Endothelial cell of umbilical vein (primary cell): ENCODE measurements at regions of chr6 and their contacts with region 1.

Region 1: DNA sequence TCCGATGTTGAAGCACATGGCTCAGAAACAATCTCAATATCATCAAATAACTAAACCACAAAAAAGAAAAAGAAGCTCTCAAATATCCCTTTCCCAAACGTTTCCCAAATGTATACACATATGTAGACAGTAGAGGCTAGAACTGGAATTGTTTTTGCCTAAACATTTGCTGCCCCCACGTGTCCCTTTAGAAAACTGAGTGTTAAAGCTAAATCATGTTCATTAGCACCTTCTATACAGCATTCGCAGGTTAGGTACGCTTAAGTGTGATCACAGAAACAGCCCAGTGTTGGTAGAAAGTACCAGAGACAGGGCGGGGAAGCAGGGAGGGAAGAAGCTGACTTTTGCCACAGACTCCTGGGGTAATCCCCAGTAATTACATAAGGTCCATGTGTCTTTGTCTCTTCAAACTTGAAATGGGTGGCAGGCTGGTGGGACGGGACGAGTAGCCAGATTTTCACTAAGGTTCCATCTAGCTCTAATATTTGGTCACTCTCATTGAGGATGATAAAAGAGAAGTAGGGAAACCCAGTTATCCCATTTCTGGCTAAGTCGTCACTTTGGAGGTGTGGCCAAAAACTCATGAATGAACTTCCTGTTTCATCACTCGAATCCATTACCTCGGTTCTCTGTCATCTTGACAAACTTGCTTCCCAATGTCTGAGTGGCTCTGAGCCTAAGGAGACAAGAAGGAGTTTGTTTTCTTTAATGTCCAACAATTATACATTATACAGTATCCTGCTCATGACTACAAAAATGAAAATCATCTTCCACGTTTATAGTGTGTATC is 15.0 kb upstream of the TFAP2A start:
- DNase-seq: peak; percentile 65
- H3K4me3 ChIP-seq: no peak overlapping the region
- H3K27ac ChIP-seq: no peak overlapping the region
- H3K4me1 ChIP-seq: peaks cover 5% of the 10 kb centered on the region
- H3K27me3 ChIP-seq: peaks cover 24 to 41% of the 10 kb centered on the region in 2 experiments
- CTCF ChIP-seq: peak; percentile 34 to 37
- POLR2A ChIP-seq: no peak

Region 2: DNA sequence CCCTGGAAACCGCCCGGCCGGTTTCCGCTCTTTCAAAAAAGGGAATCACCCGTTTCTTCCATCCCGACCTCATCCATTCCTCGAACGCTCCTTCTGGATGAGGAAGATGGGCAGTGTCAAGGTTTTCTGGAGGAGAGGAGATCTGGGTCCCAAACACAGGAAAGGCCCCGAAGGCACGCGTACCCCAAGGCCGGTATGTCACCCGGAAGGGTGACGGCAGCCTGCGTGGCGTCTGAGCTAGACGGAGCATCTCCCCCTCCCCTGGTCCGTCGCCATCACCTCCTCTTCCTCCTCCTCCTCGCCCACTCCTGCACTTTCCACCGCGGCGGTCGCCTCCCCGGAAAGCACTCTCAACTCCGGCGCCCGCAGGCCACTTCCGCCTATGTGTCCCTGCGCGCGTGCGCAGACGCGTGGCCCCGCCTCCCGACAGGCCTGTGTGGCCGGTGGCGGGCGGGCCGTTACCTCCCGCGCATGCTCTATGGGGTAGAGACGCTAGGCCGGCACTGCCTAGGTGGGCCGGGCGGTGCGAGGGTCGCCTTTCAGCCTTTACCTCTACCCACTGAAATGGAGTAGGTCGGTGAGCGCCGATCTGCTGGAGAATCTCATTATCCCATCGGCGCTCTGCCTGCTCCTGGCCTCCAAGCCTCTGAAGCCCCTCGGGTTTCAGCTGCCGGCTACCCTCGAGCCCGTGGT is 1994.5 kb before region 1 on chr6 and contains the start of gene SLC35B3:
- CTCF ChIA-PET with region 1: interaction called, 5 read pairs
- POLR2A ChIA-PET with region 1: no interaction called
- dilution Hi-C with region 1: no loop called
- intact Hi-C with region 1: loop called (anchors 10 kb)
- DNase-seq: peak; percentile 91
- H3K4me3 ChIP-seq: peak within 1 kb of the TSS; percentile 75 to 93 (median 85)
- H3K27ac ChIP-seq: peak within 1 kb of the TSS; percentile 74
- H3K4me1 ChIP-seq: peaks cover 17% of the 10 kb centered on the region
- H3K27me3 ChIP-seq: no peaks in the 10 kb centered on the region
- CTCF ChIP-seq: no peak
- POLR2A ChIP-seq: peak; percentile 83
- total RNA-seq, gene SLC35B3: 16.8 and 21.5 TPM in 2 replicates

Region 3: DNA sequence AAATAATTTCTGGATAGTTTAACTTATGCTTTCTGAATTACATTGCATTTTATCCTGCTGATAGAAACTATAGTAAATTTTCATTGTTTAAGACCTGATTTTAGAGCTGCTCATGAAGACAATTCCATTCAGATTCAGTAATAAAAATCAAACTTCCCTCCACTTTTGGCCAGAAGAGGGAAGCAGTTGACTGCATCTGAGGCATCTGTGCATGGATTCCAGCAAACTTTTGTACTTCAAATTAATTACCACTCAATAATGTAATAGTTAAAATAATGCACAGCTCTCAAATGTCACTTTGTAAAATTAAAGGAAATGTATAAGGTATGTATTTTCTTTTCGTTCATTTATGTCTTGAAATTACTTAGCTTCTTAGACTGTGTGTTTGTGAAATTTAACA is 1930.3 kb before region 1 on chr6:
- CTCF ChIA-PET with region 1: interaction called, 15 read pairs
- POLR2A ChIA-PET with region 1: no interaction called
- dilution Hi-C with region 1: no loop called
- intact Hi-C with region 1: no loop called
- DNase-seq: no peak
- H3K4me3 ChIP-seq: no peak overlapping the region
- H3K27ac ChIP-seq: no peak overlapping the region
- H3K4me1 ChIP-seq: no peaks in the 10 kb centered on the region
- H3K27me3 ChIP-seq: no peaks in the 10 kb centered on the region
- CTCF ChIP-seq: peak in 1 of 2 donors; percentile 5
- POLR2A ChIP-seq: no peak

Region 4: GRCh38 chr6:8983188-8983688 is 1446.6 kb before region 1 on chr6:
- CTCF ChIA-PET with region 1: interaction called, 150 read pairs
- POLR2A ChIA-PET with region 1: no interaction called
- dilution Hi-C with region 1: no loop called
- intact Hi-C with region 1: loop called (anchors 1 kb)
- DNase-seq: peak; percentile 58
- H3K4me3 ChIP-seq: no peak overlapping the region
- H3K27ac ChIP-seq: no peak overlapping the region
- H3K4me1 ChIP-seq: no peaks in the 10 kb centered on the region
- H3K27me3 ChIP-seq: no peaks in the 10 kb centered on the region
- CTCF ChIP-seq: peak; percentile 80 to 97
- POLR2A ChIP-seq: no peak

Region 5: DNA sequence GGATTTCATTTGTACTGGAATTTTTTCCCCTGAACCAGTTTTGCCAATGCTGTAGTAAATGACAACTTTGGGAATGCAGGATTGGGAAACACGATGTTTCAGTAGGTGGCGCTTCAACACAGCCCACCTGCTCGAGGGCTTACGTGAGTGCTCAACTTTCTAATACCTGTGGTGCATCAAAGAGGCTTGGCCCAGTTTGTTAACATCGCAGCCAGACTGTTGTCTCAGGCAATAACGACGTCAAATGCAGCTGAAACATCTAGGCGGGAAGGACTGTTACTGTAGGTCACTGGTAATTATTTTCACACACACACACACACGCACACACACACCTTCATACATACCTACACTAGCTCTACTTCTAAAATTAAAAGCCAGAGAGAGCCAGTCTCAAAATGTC is 1179.0 kb before region 1 on chr6:
- CTCF ChIA-PET with region 1: interaction called, 28 read pairs
- POLR2A ChIA-PET with region 1: no interaction called
- dilution Hi-C with region 1: no loop called
- intact Hi-C with region 1: loop called (anchors 1 kb)
- DNase-seq: peak; percentile 52
- H3K4me3 ChIP-seq: no peak overlapping the region
- H3K27ac ChIP-seq: no peak overlapping the region
- H3K4me1 ChIP-seq: no peaks in the 10 kb centered on the region
- H3K27me3 ChIP-seq: no peaks in the 10 kb centered on the region
- CTCF ChIP-seq: peak; percentile 32 to 41
- POLR2A ChIP-seq: no peak

Region 6: DNA sequence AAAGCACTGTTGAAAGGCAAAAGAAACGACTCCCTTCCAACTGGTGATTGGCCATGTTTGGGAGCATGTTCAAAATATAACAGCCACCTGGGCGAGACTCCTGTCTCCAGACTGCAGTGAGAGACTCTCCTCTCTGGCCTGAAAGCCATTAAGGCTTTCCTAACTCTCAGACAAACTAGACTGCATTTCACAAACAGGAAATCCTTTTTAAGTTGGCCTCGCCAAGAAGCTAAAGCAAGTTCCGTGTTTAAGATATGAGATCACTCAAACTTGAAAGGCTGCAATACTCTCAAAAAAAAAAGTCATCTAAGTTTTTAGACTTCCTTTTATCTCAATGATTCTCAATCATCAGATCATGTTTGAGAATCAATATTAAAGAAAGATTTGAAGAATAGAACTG is 132.0 kb before region 1 on chr6:
- CTCF ChIA-PET with region 1: no interaction called
- POLR2A ChIA-PET with region 1: no interaction called
- dilution Hi-C with region 1: no loop called
- intact Hi-C with region 1: no loop called
- DNase-seq: no peak
- H3K4me3 ChIP-seq: no peak overlapping the region
- H3K27ac ChIP-seq: no peak overlapping the region
- H3K4me1 ChIP-seq: no peaks in the 10 kb centered on the region
- H3K27me3 ChIP-seq: no peaks in the 10 kb centered on the region
- CTCF ChIP-seq: no peak
- POLR2A ChIP-seq: no peak

Region 7: DNA sequence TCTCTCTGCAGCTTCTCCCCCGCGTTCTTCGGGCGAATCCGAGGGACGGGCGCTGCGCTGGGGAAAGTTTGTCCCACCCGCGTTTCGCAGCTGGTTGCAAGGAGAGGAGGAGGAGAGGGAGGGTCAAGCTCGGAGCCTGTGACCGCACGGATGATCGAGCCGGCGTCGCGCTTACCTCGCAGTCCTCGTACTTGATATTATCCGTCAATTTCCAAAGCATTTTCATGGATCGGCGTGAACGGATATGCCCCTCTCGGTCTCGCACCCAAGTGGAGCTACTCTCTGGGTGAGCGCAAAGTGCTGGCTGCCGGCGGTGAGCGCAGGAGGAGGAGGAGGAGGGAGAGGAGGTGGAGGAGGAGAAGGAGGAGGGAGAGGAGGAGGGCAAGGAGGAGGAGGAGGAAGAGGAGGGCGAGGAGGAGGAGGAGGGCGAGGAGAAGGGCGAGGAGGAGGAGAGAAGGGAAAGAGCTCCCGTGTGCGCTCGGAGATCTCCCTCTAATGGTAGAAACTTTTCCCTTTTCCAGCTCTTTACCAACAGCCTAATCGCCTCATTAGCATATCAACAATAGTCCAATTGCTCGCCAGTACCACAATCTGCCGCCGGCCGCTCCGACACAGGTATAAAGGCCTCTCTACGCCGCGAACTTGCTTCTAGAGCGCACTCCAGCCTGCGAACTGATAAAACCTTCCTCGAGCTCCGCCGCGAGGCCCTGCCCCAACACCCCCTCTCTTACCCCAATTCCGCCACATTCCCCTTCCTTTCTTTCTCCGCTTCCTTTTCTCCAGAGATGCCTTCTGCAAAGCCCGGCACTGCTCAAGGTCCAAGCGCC is 14.9 kb before region 1 on chr6 and contains the start of gene TFAP2A:
- CTCF ChIA-PET with region 1: interaction called, 22 read pairs
- POLR2A ChIA-PET with region 1: no interaction called
- dilution Hi-C with region 1: no loop called
- intact Hi-C with region 1: no loop called
- DNase-seq: no peak
- H3K4me3 ChIP-seq: no peak within 1 kb of the TSS
- H3K27ac ChIP-seq: no peak within 1 kb of the TSS
- H3K4me1 ChIP-seq: peaks cover 9% of the 10 kb centered on the region
- H3K27me3 ChIP-seq: peaks cover 82 to 95% of the 10 kb centered on the region in 2 experiments
- CTCF ChIP-seq: no peak
- POLR2A ChIP-seq: no peak
- total RNA-seq, gene TFAP2A: not detected in 2 replicates